ENCODE measurements at regions of chr5 and their contacts with region 1.

Region 1: DNA sequence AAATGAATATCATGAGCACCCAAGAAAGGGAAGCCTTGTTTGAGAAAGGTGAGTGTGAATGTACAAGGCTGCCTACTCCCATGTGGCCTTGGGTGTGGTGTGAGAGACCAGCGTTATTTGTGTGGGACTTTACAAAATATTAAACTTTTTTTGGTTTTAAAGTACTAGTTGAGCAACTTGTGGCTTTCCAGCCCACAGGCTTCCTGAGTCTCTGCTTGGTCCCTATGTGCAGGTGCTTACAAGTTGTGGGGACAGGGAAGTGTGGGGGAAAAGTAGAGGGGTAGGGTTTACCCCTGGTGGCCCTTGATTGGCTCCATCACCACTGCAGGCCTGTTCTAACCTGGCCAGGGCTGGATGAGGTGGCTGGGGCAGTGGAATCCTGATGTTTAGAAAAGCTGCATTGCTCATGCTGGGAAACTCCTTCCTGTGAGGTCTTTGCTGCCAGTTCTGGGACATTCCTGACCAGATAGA is 19.7 kb downstream of the PTTG1 start:
- DNase-seq: no peak
- ATAC-seq: no peak

Region 2: GRCh38 chr5:160508780-160509361 is 67.5 kb after region 1 on chr5:
- intact Hi-C with region 1: loop called in 1 of 2 experiments (anchors 10 kb)
- DNase-seq: peak; percentile 37 to 48
- ATAC-seq: peak; percentile 96